ENCODE measurements at regions of chr9 and their contacts with region 1.

Region 1: DNA sequence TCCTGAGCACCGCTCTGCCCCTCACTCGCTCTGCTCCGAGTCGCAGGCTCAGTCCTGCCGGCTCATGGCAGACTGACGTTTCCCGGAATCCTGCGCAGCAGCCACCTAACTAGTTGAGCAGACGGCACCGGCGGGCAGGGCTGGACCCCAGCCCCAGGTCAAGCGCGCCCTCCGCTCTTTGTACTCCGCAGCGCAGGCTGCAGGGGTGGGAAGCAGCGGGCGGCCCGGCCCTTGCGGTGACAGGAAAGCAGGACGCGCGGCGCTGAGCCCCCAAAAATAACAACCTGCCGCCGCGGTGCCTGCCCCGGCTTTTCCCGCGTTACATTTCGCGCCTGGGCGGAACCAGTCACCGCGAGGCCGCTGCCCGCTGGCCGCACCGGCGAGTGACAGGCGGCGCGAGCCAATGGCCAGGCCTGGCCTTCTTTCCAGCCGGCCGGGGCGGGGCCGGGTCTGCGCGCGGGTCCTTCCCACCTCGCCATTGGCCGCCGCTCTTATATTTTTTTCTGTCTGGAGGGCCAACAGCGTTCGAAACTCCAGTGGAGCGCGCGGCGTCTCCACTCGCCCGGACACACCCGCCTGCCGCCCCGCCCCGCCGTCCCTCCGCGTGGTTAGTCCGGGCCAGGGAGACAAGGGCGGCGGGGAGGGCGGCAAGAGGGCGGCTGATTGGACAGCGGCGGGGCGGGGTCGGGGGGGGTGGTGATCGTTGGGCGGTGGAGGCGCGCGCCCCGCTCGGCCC is at the start of gene ZNF367:
- DNase-seq: peak; percentile 99
- ATAC-seq: peak; percentile 91 to 94
- total RNA-seq, gene ZNF367: 2.2 to 3.1 TPM

Region 2: GRCh38 chr9:96150324-96151227 is 267.7 kb before region 1 on chr9:
- intact Hi-C with region 1: no loop called
- DNase-seq: no peak
- ATAC-seq: peak; percentile 14 to 19

Region 3: DNA sequence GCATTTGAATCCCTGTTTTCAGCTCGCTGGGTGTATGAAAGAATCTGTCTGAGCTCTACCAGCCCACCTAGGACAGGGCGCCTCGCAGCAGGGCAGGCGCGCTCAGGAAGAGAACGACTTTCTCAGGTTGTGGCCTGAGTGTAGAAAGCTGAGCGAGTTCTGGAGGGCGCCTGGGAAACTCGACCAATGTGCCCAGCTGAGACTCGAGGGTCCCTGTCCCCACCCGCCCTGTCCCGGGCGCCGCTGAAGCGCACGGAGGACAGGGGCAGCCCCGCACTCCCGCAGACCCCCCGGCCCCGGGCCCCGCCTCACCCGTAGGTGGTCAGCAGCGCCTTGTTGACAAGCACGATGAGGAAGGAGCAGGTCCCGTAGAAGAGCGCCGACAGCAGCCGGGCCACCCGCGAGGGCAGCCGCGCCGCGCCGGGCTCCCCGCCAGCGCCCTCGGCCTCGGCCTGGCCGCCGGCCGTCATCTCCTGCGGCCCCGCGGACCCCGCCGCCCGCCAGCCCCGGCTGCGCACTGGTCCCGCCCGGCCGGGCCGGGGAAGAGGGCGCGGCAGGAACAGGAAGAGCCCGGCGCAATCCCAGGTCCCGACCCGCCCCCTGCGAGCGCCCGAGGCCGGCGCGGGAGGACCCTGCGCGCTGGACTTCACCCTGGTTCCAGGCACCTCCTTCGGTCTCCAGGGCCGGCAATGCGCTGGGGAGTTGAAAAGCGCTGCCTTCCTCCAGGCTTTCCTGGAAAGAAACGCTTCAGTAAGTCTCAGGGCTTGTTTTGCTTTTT is 34.9 kb before region 1 on chr9 and contains the start of gene SLC35D2:
- intact Hi-C with region 1: loop called in 1 of 2 experiments (anchors 2 kb)
- DNase-seq: peak; percentile 76
- ATAC-seq: peak; percentile 96 to 98
- total RNA-seq, gene SLC35D2: 14.1 to 14.2 TPM

Region 4: GRCh38 chr9:96491079-96491879 is 73.0 kb after region 1 on chr9:
- intact Hi-C with region 1: no loop called
- DNase-seq: no peak
- ATAC-seq: peak in 1 of 2 donors; percentile 36

Measured in left cardiac atrium (tissue), 4 donors.